A549 (cell line): ENCODE measurements at regions of chr20 and their contacts with region 1.

Region 1: GRCh38 chr20:20837574-20838021 is 125.2 kb upstream of the RALGAPA2 start:
- DNase-seq: peak; percentile 59 to 65
- ATAC-seq: peak; percentile 80 to 89; a peak in 5 of 6 replicates
- H3K4me3 ChIP-seq: no peak overlapping the region
- H3K27ac ChIP-seq: no peak overlapping the region
- H3K4me1 ChIP-seq: no peaks in the 10 kb centered on the region
- CTCF ChIP-seq: peak; percentile 85
- EP300 ChIP-seq: no peak
- POLR2A ChIP-seq: no peak
- RAD21 ChIP-seq: peak; percentile 85 to 89

Region 2: GRCh38 chr20:20814685-20815084 is 22.9 kb before region 1 on chr20:
- CTCF ChIA-PET with region 1: interaction called, 10 read pairs
- POLR2A ChIA-PET with region 1: no interaction called
- DNase-seq: peak in 1 of 2 experiments; percentile 12
- ATAC-seq: no peak
- H3K4me3 ChIP-seq: no peak overlapping the region
- H3K27ac ChIP-seq: no peak overlapping the region
- H3K4me1 ChIP-seq: no peaks in the 10 kb centered on the region
- CTCF ChIP-seq: no peak
- EP300 ChIP-seq: no peak
- POLR2A ChIP-seq: no peak
- RAD21 ChIP-seq: no peak

Region 3: DNA sequence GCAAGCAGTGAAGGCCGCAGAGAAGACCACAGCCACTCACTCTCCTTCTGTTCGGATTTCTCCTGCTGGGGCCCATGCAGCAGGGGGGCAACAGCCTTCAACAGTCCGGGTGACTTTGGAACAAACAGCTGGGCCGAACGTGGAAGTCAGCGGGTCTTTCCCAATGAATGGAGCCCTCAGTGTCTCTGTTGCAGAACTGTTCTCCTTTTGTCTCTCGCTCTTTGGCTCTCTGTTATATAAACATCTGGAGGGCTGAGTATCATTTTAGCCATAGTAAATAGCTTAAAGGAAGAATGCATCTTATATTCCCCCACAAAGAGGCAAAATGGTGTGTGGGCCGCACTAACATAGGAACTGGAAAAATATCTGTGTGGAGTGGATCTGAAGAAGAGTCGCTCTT is 11.6 kb after region 1 on chr20:
- CTCF ChIA-PET with region 1: interaction called, 20 read pairs
- POLR2A ChIA-PET with region 1: no interaction called
- DNase-seq: no peak
- ATAC-seq: no peak
- H3K4me3 ChIP-seq: no peak overlapping the region
- H3K27ac ChIP-seq: no peak overlapping the region
- H3K4me1 ChIP-seq: no peaks in the 10 kb centered on the region
- CTCF ChIP-seq: no peak
- EP300 ChIP-seq: no peak
- POLR2A ChIP-seq: no peak
- RAD21 ChIP-seq: no peak

Region 4: GRCh38 chr20:20875716-20876115 is 38.1 kb after region 1 on chr20:
- CTCF ChIA-PET with region 1: interaction called, 14 read pairs
- POLR2A ChIA-PET with region 1: no interaction called
- DNase-seq: no peak
- ATAC-seq: no peak
- H3K4me3 ChIP-seq: no peak overlapping the region
- H3K27ac ChIP-seq: no peak overlapping the region
- H3K4me1 ChIP-seq: no peaks in the 10 kb centered on the region
- CTCF ChIP-seq: no peak
- EP300 ChIP-seq: no peak
- POLR2A ChIP-seq: no peak
- RAD21 ChIP-seq: no peak

Region 5: GRCh38 chr20:21004386-21005076 is 166.9 kb after region 1 on chr20:
- CTCF ChIA-PET with region 1: no interaction called
- POLR2A ChIA-PET with region 1: no interaction called
- DNase-seq: no peak
- ATAC-seq: no peak
- H3K4me3 ChIP-seq: no peak overlapping the region
- H3K27ac ChIP-seq: no peak overlapping the region
- H3K4me1 ChIP-seq: no peaks in the 10 kb centered on the region
- CTCF ChIP-seq: no peak
- EP300 ChIP-seq: no peak
- POLR2A ChIP-seq: no peak
- RAD21 ChIP-seq: no peak

Region 6: DNA sequence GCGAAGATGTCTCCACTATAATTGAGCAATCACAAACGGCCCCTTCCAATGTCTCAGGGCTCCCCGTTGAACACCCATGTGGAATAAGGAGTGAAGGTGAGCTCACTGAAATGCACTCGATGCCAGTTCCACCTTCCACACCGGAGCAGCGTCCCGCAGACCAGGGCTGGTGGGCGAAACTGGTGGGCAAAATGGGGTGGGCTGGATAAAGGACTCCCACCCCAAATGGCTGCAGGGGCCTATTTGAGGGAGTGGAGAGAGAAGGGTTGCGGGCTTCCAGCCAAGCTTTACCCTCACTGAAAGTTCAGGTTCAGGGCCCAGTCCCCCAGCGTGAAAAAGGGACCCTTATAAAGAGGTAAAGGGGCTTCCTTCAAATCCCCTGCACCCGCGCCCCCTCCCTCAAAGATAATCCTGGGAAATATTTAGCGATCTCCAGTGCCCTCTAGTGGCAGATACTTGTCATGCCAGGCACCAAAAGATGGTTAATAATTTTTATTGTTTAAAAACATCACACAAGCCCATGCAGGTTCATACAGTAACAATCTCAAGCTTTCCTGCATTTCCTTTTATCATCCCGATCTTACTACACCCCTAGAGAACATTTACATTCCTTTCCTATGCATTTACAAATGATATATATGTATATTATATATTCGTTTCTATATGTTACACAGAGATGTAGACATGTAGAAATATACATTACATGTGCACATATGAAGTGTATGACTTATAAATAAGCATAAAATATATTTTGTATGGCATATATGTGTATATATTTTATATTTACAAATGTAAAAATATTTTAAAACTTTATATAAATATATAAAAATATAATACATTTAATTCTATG is 734.5 kb after region 1 on chr20:
- CTCF ChIA-PET with region 1: interaction called, 34 read pairs
- POLR2A ChIA-PET with region 1: no interaction called
- DNase-seq: no peak
- ATAC-seq: peak in 1 of 2 experiments; percentile 45; a peak in 2 of 6 replicates
- H3K4me3 ChIP-seq: no peak overlapping the region
- H3K27ac ChIP-seq: no peak overlapping the region
- H3K4me1 ChIP-seq: no peaks in the 10 kb centered on the region
- CTCF ChIP-seq: peak; percentile 88
- EP300 ChIP-seq: no peak
- POLR2A ChIP-seq: no peak
- RAD21 ChIP-seq: peak; percentile 77 to 81